CD4-positive, alpha-beta memory T cell (primary cell): ENCODE measurements at regions of chr14 and their contacts with region 1.

Region 1: GRCh38 chr14:61837336-61838229 is 75.4 kb downstream of the SNAPC1 start:
- DNase-seq: peak; percentile 64 to 72 (median 67)
- H3K4me3 ChIP-seq: no peak overlapping the region
- H3K4me3 Mint-ChIP-seq: no peak overlapping the region
- H3K27ac ChIP-seq: no peak overlapping the region
- H3K27ac Mint-ChIP-seq: no peak overlapping the region
- H3K4me1 ChIP-seq: no peaks in the 10 kb centered on the region
- H3K4me1 Mint-ChIP-seq: no peaks in the 10 kb centered on the region
- H3K27me3 ChIP-seq: no peaks in the 10 kb centered on the region
- H3K27me3 Mint-ChIP-seq: peaks cover 1 to 7% of the 10 kb centered on the region in 2 donors

Region 2: GRCh38 chr14:61269321-61270083 is 568.1 kb before region 1 on chr14:
- CTCF ChIA-PET with region 1: interaction called, 18 read pairs
- POLR2A ChIA-PET with region 1: no interaction called
- intact Hi-C with region 1: loop called (anchors 1 kb)
- DNase-seq: peak; percentile 71 to 77 (median 74)
- H3K4me3 ChIP-seq: peak overlapping the region in 1 of 2 donors; percentile 29
- H3K4me3 Mint-ChIP-seq: peak overlapping the region in 7 of 8 donors; percentile 58 to 83 (median 79)
- H3K27ac ChIP-seq: no peak overlapping the region
- H3K27ac Mint-ChIP-seq: no peak overlapping the region
- H3K4me1 ChIP-seq: peaks cover 5% of the 10 kb centered on the region
- H3K4me1 Mint-ChIP-seq: peaks cover 0 to 7% (median 2%) of the 10 kb centered on the region in 4 donors
- H3K27me3 ChIP-seq: peaks cover 5% of the 10 kb centered on the region
- H3K27me3 Mint-ChIP-seq: peaks cover 24 to 30% of the 10 kb centered on the region in 2 donors

Region 3: DNA sequence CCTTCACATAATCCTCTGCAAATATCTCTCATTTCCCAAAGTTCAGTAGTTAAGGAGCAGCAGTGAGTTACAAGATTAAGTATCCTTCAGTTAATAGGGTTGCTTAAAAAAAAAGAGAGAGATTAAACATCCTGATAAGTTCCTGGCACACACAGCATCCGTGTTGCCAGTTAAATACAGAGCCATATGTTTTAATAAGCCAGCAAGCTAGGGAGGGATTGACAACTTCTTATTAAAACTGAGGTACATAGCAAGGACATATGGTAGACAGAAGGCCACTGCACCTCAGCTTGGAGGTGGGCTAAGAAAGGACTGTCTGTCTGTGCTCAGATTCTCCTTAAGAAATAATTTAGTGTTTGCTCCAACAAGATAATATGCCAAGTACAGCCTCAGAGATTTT is 546.9 kb before region 1 on chr14:
- CTCF ChIA-PET with region 1: interaction called, 29 read pairs
- POLR2A ChIA-PET with region 1: no interaction called
- intact Hi-C with region 1: no loop called
- DNase-seq: no peak
- H3K4me3 ChIP-seq: no peak overlapping the region
- H3K4me3 Mint-ChIP-seq: no peak overlapping the region
- H3K27ac ChIP-seq: no peak overlapping the region
- H3K27ac Mint-ChIP-seq: no peak overlapping the region
- H3K4me1 ChIP-seq: peaks cover 7% of the 10 kb centered on the region
- H3K4me1 Mint-ChIP-seq: peaks cover 3 to 7% (median 5%) of the 10 kb centered on the region in 4 donors
- H3K27me3 ChIP-seq: no peaks in the 10 kb centered on the region
- H3K27me3 Mint-ChIP-seq: no peaks in the 10 kb centered on the region

Region 4: GRCh38 chr14:61456720-61457119 is 380.9 kb before region 1 on chr14:
- CTCF ChIA-PET with region 1: interaction called, 60 read pairs
- POLR2A ChIA-PET with region 1: interaction called, 4 read pairs
- intact Hi-C with region 1: loop called (anchors 1 kb)
- DNase-seq: peak; percentile 74 to 83 (median 77)
- H3K4me3 ChIP-seq: no peak overlapping the region
- H3K4me3 Mint-ChIP-seq: peak overlapping the region in 2 of 8 donors; percentile 17 to 27
- H3K27ac ChIP-seq: peak overlapping the region; percentile 13
- H3K27ac Mint-ChIP-seq: peak overlapping the region; percentile 75 to 97 (median 92)
- H3K4me1 ChIP-seq: peaks cover 70% of the 10 kb centered on the region
- H3K4me1 Mint-ChIP-seq: peaks cover 63 to 91% (median 71%) of the 10 kb centered on the region in 4 donors
- H3K27me3 ChIP-seq: no peaks in the 10 kb centered on the region
- H3K27me3 Mint-ChIP-seq: no peaks in the 10 kb centered on the region

Region 5: GRCh38 chr14:61553725-61554641 is 283.6 kb before region 1 on chr14:
- CTCF ChIA-PET with region 1: interaction called, 3 read pairs
- POLR2A ChIA-PET with region 1: no interaction called
- intact Hi-C with region 1: loop called (anchors 10 kb)
- DNase-seq: no peak
- H3K4me3 ChIP-seq: no peak overlapping the region
- H3K4me3 Mint-ChIP-seq: peak overlapping the region in 2 of 8 donors; percentile 15 to 45
- H3K27ac ChIP-seq: no peak overlapping the region
- H3K27ac Mint-ChIP-seq: peak overlapping the region in 6 of 7 donors; percentile 23 to 92 (median 72)
- H3K4me1 ChIP-seq: peaks cover 21% of the 10 kb centered on the region
- H3K4me1 Mint-ChIP-seq: peaks cover 20 to 54% (median 29%) of the 10 kb centered on the region in 4 donors
- H3K27me3 ChIP-seq: no peaks in the 10 kb centered on the region
- H3K27me3 Mint-ChIP-seq: no peaks in the 10 kb centered on the region

Region 6: DNA sequence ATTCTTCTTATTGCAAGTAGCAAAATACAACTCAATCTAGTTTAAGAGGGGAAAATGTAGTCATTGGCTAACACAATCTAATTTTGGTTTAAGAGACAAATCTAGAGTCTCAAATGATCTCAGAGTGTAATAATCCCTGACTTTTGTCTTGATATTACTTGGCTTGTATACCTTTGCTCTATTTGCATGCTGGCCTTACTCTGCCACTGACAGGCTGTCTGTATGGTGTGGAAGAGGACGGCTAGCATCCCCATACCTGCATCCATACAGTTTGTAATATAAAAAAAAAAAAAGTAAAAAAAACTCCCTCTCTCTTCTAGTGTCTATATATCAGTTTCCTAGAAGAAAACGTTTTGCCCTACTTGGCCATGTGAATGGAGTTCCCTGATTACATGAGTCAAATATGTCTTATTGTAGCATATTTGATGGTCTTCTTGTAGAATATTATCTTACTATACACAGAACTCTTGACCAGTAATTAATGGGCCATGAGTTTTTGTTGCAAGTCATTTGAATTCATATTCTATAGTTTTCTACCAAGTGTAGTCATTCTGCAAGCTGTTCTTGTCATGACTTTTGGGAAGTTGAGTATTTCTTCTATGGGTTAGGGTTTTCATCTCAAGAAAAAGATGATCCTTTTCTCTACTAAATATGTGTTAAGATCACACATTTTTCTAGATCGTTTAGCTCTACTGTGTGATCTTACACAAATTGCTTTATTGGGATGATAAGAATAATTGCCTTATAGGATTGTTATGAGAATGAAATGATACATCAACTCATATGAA is 134.0 kb before region 1 on chr14:
- CTCF ChIA-PET with region 1: no interaction called
- POLR2A ChIA-PET with region 1: no interaction called
- intact Hi-C with region 1: no loop called
- DNase-seq: no peak
- H3K4me3 ChIP-seq: no peak overlapping the region
- H3K4me3 Mint-ChIP-seq: peak overlapping the region in 6 of 8 donors; percentile 10 to 66 (median 48)
- H3K27ac ChIP-seq: no peak overlapping the region
- H3K27ac Mint-ChIP-seq: peak overlapping the region in 2 of 7 donors; percentile 29 to 74
- H3K4me1 ChIP-seq: peaks cover 79% of the 10 kb centered on the region
- H3K4me1 Mint-ChIP-seq: peaks cover 54 to 78% (median 64%) of the 10 kb centered on the region in 4 donors
- H3K27me3 ChIP-seq: no peaks in the 10 kb centered on the region
- H3K27me3 Mint-ChIP-seq: no peaks in the 10 kb centered on the region

Region 7: GRCh38 chr14:61750708-61751474 is 86.7 kb before region 1 on chr14:
- CTCF ChIA-PET with region 1: interaction called, 10 read pairs
- POLR2A ChIA-PET with region 1: no interaction called
- intact Hi-C with region 1: no loop called
- DNase-seq: peak; percentile 70 to 77 (median 72)
- H3K4me3 ChIP-seq: peak overlapping the region; percentile 39 to 59
- H3K4me3 Mint-ChIP-seq: peak overlapping the region; percentile 84 to 93 (median 88)
- H3K27ac ChIP-seq: peak overlapping the region; percentile 50
- H3K27ac Mint-ChIP-seq: peak overlapping the region in 6 of 7 donors; percentile 72 to 96 (median 90)
- H3K4me1 ChIP-seq: peaks cover 11% of the 10 kb centered on the region
- H3K4me1 Mint-ChIP-seq: peaks cover 3 to 19% (median 4%) of the 10 kb centered on the region in 4 donors
- H3K27me3 ChIP-seq: no peaks in the 10 kb centered on the region
- H3K27me3 Mint-ChIP-seq: peaks cover 0 to 1% of the 10 kb centered on the region in 2 donors